Heart left ventricle (tissue), 16 donors: ENCODE measurements at regions of chr15 and their contacts with region 1.

Region 1: DNA sequence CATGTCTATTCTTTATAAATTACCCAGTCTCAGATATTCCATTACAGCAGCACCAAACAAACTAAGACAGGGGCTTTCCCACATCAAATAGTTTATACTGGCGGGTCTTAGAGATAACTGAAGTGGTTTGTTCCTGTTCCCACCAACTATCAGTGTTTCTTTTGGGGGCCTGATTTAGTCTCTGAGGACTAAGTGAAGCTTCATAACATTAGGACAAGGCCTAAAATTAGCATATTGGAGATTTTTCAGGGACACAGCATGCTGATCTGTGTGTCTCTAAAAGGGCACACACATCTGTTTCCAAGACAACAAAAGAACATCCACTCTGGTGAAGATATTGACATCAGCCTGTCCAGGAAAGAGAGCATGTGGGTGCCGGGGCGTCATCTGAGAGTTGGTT is 72.6 kb upstream of the SEMA6D start:
- DNase-seq: no peak
- ATAC-seq: peak; percentile 33 to 69 (median 42)
- H3K4me3 ChIP-seq: no peak overlapping the region
- H3K27ac ChIP-seq: peak overlapping the region in 2 of 12 donors; percentile 25 to 30
- H3K4me1 ChIP-seq: peaks cover 0 to 7% (median 0%) of the 10 kb centered on the region in 12 donors
- H3K27me3 ChIP-seq: peaks cover 0 to 4% (median 0%) of the 10 kb centered on the region in 9 donors
- CTCF ChIP-seq: no peak
- POLR2A ChIP-seq: no peak

Region 2: GRCh38 chr15:46654993-46655392 is 989.7 kb before region 1 on chr15:
- intact Hi-C with region 1: loop called in 1 of 10 experiments (anchors 10 kb)
- DNase-seq: no peak
- ATAC-seq: no peak
- H3K4me3 ChIP-seq: no peak overlapping the region
- H3K27ac ChIP-seq: no peak overlapping the region
- H3K4me1 ChIP-seq: no peaks in the 10 kb centered on the region
- H3K27me3 ChIP-seq: no peaks in the 10 kb centered on the region
- CTCF ChIP-seq: no peak
- POLR2A ChIP-seq: no peak

Region 3: DNA sequence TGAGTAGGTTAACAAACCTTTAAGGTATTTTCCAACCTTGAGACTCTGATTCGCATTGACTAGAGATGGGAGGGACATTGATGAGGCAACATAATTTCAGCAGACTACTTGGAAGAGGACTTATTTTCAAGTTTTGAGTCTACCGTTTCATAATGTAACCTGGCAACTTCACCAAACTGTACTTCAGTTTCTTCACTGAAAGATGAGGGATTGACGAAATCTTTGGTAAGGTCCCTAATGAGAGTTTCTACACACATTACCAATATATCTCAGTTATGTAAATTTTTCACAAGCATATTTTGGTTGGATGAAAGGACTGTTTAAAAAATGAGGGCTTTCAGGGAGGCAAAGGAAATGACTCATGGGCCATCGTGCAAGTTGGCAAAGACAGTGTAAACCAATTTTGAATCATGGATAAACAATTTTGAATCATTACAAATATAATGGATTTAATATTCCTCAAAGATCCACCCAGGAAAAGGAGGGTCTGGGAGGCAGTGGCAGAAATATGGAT is 43.9 kb after region 1 on chr15:
- intact Hi-C with region 1: loop called in 1 of 10 experiments (anchors 10 kb)
- DNase-seq: no peak
- ATAC-seq: no peak
- H3K4me3 ChIP-seq: no peak overlapping the region
- H3K27ac ChIP-seq: no peak overlapping the region
- H3K4me1 ChIP-seq: no peaks in the 10 kb centered on the region
- H3K27me3 ChIP-seq: no peaks in the 10 kb centered on the region
- CTCF ChIP-seq: no peak
- POLR2A ChIP-seq: no peak